CD8-positive, alpha-beta T cell (primary cell): ENCODE measurements at regions of chr6 and their contacts with region 1.

Region 1: GRCh38 chr6:134938896-134939295 is 11.0 kb downstream of the ALDH8A1 start:
- DNase-seq: peak in 6 of 9 experiments; percentile 4 to 76 (median 40)
- ATAC-seq: peak; percentile 96
- H3K4me3 ChIP-seq: no peak overlapping the region
- H3K4me3 Mint-ChIP-seq: no peak overlapping the region
- H3K27ac ChIP-seq: no peak overlapping the region
- H3K27ac Mint-ChIP-seq: no peak overlapping the region
- H3K4me1 ChIP-seq: peaks cover 9% of the 10 kb centered on the region
- H3K4me1 Mint-ChIP-seq: peaks cover 10% of the 10 kb centered on the region
- H3K27me3 ChIP-seq: no peaks in the 10 kb centered on the region
- H3K27me3 Mint-ChIP-seq: no peaks in the 10 kb centered on the region
- CTCF ChIP-seq: no peak

Region 2: DNA sequence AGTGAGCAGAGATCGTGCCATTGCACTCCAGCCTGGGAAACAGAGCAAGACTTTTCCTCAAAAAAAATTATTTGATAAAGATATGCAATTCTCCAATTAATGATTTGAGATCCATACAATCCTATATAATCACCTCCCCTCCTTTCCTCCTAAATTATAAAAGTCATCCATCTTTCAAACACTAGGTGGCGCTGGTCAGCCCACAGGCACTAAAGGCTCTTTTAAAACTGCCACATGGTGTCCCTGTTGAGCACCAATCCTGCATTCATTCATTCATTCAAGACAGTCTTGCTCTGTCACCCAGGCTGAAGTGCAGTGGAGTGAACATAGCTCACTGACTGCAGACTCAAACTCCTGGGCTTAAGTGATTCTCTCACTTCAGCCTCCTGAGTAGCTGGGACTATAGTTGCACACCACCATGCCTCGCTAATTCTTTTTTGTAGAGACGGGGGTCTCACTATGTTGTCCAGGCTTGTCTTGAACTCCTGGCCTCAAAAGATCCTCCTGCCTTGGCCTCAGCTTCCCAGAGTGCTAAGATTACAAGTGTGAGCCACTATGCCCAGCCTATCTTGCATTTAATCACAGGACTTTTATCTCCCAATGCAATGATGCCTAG is 827.7 kb before region 1 on chr6:
- CTCF ChIA-PET with region 1: interaction called, 10 read pairs
- POLR2A ChIA-PET with region 1: no interaction called
- intact Hi-C with region 1: loop called in 1 of 2 experiments (anchors 1 kb)
- DNase-seq: peak in 6 of 9 experiments; percentile 7 to 77 (median 44)
- ATAC-seq: peak; percentile 96
- H3K4me3 ChIP-seq: no peak overlapping the region
- H3K4me3 Mint-ChIP-seq: no peak overlapping the region
- H3K27ac ChIP-seq: no peak overlapping the region
- H3K27ac Mint-ChIP-seq: no peak overlapping the region
- H3K4me1 ChIP-seq: no peaks in the 10 kb centered on the region
- H3K4me1 Mint-ChIP-seq: peaks cover 3% of the 10 kb centered on the region
- H3K27me3 ChIP-seq: no peaks in the 10 kb centered on the region
- H3K27me3 Mint-ChIP-seq: peaks cover 14% of the 10 kb centered on the region
- CTCF ChIP-seq: peak; percentile 89

Region 3: DNA sequence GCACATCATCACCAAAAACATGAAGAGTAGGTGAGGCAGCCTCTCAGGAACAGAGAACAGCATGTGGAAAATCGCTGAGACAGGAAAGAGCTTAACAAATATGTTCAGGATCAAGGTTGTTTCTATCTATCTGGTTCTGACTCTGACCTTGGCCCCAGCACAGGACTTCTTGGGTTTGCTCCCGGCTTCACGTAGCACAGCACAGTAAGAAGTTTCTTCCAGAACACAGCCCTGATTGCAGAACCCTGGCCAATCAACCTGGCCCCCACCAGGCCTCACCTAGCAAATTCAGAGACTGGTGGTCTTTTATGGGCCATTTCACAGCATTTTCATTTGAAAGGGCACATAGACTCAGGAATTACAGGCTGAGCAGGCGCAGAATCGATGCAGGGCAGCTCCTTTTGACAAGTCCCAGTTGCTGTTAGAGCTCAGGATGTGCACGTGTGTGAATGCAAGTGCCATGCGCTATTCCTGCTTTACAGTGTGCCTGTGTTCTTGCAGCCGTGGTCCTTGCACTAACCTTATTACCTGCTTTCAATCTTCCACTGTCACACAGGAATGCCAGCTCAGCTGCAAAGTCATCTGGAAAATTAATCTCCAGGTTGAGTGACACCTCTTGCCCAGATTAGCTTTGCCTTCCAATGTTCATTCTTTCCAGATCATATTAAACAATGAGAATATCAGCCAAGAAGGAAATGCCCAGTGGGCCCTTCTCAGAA is 786.0 kb before region 1 on chr6:
- CTCF ChIA-PET with region 1: interaction called, 76 read pairs
- POLR2A ChIA-PET with region 1: interaction called, 4 read pairs
- intact Hi-C with region 1: loop called (anchors 1 kb)
- DNase-seq: no peak
- ATAC-seq: no peak
- H3K4me3 ChIP-seq: no peak overlapping the region
- H3K4me3 Mint-ChIP-seq: no peak overlapping the region
- H3K27ac ChIP-seq: no peak overlapping the region
- H3K27ac Mint-ChIP-seq: no peak overlapping the region
- H3K4me1 ChIP-seq: no peaks in the 10 kb centered on the region
- H3K4me1 Mint-ChIP-seq: no peaks in the 10 kb centered on the region
- H3K27me3 ChIP-seq: no peaks in the 10 kb centered on the region
- H3K27me3 Mint-ChIP-seq: no peaks in the 10 kb centered on the region
- CTCF ChIP-seq: no peak

Region 4: DNA sequence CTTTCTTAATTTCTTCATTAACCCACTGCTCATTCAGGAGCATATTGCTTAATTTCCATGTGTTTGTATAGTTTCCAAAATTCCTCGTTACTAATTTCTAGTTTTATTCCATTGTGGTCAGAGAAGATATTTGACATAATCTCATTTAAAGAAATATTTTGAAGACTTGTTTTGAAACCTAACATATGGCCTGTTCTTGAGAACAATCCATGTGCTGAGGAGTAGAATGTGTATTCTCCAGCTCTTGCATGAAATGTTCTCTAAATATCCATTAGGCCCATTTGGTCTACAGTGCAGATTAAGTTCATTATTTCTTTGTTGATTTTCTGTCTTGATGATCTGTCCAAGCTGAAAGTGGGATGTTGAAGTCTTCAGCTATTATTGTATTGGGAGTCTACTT is 240.7 kb before region 1 on chr6:
- CTCF ChIA-PET with region 1: no interaction called
- POLR2A ChIA-PET with region 1: no interaction called
- intact Hi-C with region 1: no loop called
- DNase-seq: no peak
- ATAC-seq: no peak
- H3K4me3 ChIP-seq: no peak overlapping the region
- H3K4me3 Mint-ChIP-seq: no peak overlapping the region
- H3K27ac ChIP-seq: no peak overlapping the region
- H3K27ac Mint-ChIP-seq: no peak overlapping the region
- H3K4me1 ChIP-seq: no peaks in the 10 kb centered on the region
- H3K4me1 Mint-ChIP-seq: no peaks in the 10 kb centered on the region
- H3K27me3 ChIP-seq: no peaks in the 10 kb centered on the region
- H3K27me3 Mint-ChIP-seq: peaks cover 14% of the 10 kb centered on the region
- CTCF ChIP-seq: no peak

Region 5: DNA sequence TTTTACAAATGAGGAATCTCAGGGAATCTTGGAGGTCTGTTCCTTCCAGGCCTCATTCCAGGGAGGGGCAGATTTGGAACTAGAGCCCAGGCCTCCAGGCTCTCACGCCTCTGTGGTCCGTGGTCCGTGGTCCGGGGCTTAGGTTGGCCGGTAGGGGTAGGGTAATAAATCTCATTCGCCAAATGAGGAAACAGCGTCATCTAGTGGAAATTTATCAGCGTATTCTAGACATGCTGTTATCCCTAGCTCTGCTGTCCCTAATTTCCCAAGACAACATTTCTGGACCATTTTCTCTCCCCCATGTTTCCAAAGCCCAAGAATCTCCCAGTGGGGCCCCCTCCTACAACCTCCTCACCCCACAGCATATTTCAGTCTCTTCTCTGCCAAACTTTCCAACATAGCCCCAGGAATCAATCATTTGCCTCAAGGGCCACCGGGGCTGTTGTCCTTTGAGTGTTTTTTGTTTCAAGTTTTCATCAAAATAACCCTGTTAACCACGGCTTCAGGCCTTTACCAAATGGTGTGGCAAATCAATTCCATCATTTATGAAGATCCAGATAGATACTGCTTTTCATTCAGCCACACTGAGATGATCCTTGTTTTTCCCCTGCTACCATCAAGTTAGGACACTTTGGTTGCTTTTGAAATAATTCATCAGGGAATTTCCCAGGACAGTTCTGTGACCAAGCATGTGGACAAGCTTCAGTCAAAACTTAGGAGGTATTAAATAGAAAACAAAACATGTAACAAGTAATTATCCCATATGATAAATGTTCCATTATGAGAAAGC is 115.8 kb before region 1 on chr6:
- CTCF ChIA-PET with region 1: interaction called, 9 read pairs
- POLR2A ChIA-PET with region 1: no interaction called
- intact Hi-C with region 1: loop called in 1 of 2 experiments (anchors 2 kb)
- DNase-seq: peak in 4 of 9 experiments; percentile 22 to 74 (median 58)
- ATAC-seq: peak; percentile 61
- H3K4me3 ChIP-seq: no peak overlapping the region
- H3K4me3 Mint-ChIP-seq: no peak overlapping the region
- H3K27ac ChIP-seq: no peak overlapping the region
- H3K27ac Mint-ChIP-seq: no peak overlapping the region
- H3K4me1 ChIP-seq: no peaks in the 10 kb centered on the region
- H3K4me1 Mint-ChIP-seq: peaks cover 4% of the 10 kb centered on the region
- H3K27me3 ChIP-seq: no peaks in the 10 kb centered on the region
- H3K27me3 Mint-ChIP-seq: peaks cover 6% of the 10 kb centered on the region
- CTCF ChIP-seq: peak; percentile 76

Region 6: GRCh38 chr6:134949927-134950326 is 11.0 kb after region 1 on chr6 and contains the start of gene ALDH8A1:
- CTCF ChIA-PET with region 1: interaction called, 11 read pairs
- POLR2A ChIA-PET with region 1: no interaction called
- intact Hi-C with region 1: no loop called
- DNase-seq: no peak
- ATAC-seq: no peak
- H3K4me3 ChIP-seq: no peak within 1 kb of the TSS
- H3K4me3 Mint-ChIP-seq: no peak within 1 kb of the TSS
- H3K27ac ChIP-seq: no peak within 1 kb of the TSS
- H3K27ac Mint-ChIP-seq: no peak within 1 kb of the TSS
- H3K4me1 ChIP-seq: no peaks in the 10 kb centered on the region
- H3K4me1 Mint-ChIP-seq: no peaks in the 10 kb centered on the region
- H3K27me3 ChIP-seq: no peaks in the 10 kb centered on the region
- H3K27me3 Mint-ChIP-seq: no peaks in the 10 kb centered on the region
- CTCF ChIP-seq: no peak
- total RNA-seq, gene ALDH8A1: 0.43 to 2.4 TPM